H1 (cell line): ENCODE measurements at regions of chr17 and their contacts with region 1.

Region 1: DNA sequence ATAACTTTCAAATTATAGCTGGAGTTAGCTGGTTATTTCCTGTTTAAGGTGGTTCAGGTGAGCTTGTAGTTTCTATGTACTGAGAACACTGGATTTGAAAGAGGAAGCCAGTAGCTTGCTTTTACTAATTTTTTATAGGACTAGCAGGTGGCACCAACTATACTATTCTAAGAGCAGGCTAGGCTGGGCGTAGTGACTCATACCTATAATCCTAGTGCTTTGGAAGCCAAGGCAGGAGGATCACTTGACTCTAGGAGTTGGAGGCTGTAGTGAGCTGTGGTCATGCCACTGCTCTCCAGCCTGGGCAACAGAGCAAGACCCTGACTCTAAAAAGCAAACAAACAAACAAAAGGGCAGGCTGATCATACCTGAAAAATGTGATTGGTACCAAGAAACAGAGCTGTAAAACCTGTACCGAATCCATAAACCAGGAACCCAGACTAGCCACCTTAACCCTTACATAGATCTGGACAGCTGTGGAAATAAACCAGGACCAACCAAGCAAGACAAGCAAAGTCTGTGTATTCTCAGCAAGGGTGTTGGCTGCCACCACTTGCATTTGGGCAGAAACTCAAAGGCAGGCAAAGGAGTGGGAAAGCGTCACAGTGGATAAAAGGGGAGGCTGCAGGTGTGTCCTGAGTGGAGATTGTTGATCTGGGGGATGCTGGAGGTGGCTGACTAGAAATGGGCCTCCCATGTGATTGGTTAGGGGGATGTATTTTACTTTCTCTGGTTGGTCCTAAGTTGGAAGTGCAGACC is 36.3 kb downstream of the SLC47A1 start:
- DNase-seq: no peak
- H3K4me3 ChIP-seq: no peak overlapping the region
- H3K27ac ChIP-seq: no peak overlapping the region; the same call in 1 of the 2 replicates
- H3K4me1 ChIP-seq: peaks cover 0 to 2% (median 0%) of the 10 kb centered on the region in 4 experiments; a peak in 1 of 7 replicates
- H3K27me3 ChIP-seq: no peaks in the 10 kb centered on the region; a peak in 2 of 7 replicates
- CTCF ChIP-seq: no peak
- EP300 ChIP-seq: no peak
- POLR2A ChIP-seq: no peak
- RAD21 ChIP-seq: no peak

Region 2: GRCh38 chr17:19482576-19482975 is 87.4 kb before region 1 on chr17:
- CTCF ChIA-PET with region 1: no interaction called
- POLR2A ChIA-PET with region 1: no interaction called
- DNase-seq: no peak
- H3K4me3 ChIP-seq: peak overlapping the region in 1 of 4 experiments; percentile 16; a peak in 1 of 8 replicates
- H3K27ac ChIP-seq: no peak overlapping the region
- H3K4me1 ChIP-seq: peaks cover 0 to 10% (median 5%) of the 10 kb centered on the region in 4 experiments; a peak in 5 of 7 replicates
- H3K27me3 ChIP-seq: no peaks in the 10 kb centered on the region
- CTCF ChIP-seq: no peak
- EP300 ChIP-seq: peak in 1 of 2 experiments; percentile 8; a peak in 1 of 3 replicates
- POLR2A ChIP-seq: no peak
- RAD21 ChIP-seq: no peak

Region 3: GRCh38 chr17:19614900-19615299 is 44.9 kb after region 1 on chr17:
- CTCF ChIA-PET with region 1: interaction called, 10 read pairs
- POLR2A ChIA-PET with region 1: no interaction called
- DNase-seq: no peak
- H3K4me3 ChIP-seq: no peak overlapping the region
- H3K27ac ChIP-seq: no peak overlapping the region
- H3K4me1 ChIP-seq: no peaks in the 10 kb centered on the region
- H3K27me3 ChIP-seq: no peaks in the 10 kb centered on the region
- CTCF ChIP-seq: peak; percentile 32 to 48 (median 44); a peak in 3 of 4 replicates
- EP300 ChIP-seq: no peak
- POLR2A ChIP-seq: no peak
- RAD21 ChIP-seq: peak; percentile 46 to 60

Region 4: DNA sequence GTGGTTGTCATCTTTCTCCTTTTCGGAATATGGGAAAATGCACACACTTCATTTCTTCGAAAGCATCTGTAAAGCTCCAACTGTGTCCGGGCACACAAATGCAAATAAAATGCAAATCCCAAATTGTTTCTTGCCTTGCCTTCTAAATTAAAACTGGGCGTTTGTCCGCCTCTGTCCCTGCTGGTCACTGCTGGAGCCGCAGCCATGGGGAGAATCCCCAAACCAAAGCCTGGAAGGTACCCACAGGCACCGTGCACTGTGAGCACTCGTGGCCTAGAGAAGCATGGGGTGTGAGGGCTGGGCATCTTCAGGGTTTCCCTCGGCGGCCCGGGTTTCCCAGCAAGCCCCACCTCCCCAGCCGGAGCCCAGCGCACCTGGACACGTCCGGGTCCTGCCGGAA is 143.5 kb after region 1 on chr17:
- CTCF ChIA-PET with region 1: interaction called, 10 read pairs
- POLR2A ChIA-PET with region 1: no interaction called
- DNase-seq: no peak
- H3K4me3 ChIP-seq: no peak overlapping the region
- H3K27ac ChIP-seq: no peak overlapping the region
- H3K4me1 ChIP-seq: peaks cover 0 to 8% (median 0%) of the 10 kb centered on the region in 4 experiments; a peak in 2 of 7 replicates
- H3K27me3 ChIP-seq: no peaks in the 10 kb centered on the region
- CTCF ChIP-seq: peak; percentile 49 to 63 (median 63); a peak in 3 of 4 replicates
- EP300 ChIP-seq: no peak
- POLR2A ChIP-seq: no peak
- RAD21 ChIP-seq: peak; percentile 43 to 44